OCI-LY7 (cell line): ENCODE measurements at regions of chr15 and their contacts with region 1.

Region 1: DNA sequence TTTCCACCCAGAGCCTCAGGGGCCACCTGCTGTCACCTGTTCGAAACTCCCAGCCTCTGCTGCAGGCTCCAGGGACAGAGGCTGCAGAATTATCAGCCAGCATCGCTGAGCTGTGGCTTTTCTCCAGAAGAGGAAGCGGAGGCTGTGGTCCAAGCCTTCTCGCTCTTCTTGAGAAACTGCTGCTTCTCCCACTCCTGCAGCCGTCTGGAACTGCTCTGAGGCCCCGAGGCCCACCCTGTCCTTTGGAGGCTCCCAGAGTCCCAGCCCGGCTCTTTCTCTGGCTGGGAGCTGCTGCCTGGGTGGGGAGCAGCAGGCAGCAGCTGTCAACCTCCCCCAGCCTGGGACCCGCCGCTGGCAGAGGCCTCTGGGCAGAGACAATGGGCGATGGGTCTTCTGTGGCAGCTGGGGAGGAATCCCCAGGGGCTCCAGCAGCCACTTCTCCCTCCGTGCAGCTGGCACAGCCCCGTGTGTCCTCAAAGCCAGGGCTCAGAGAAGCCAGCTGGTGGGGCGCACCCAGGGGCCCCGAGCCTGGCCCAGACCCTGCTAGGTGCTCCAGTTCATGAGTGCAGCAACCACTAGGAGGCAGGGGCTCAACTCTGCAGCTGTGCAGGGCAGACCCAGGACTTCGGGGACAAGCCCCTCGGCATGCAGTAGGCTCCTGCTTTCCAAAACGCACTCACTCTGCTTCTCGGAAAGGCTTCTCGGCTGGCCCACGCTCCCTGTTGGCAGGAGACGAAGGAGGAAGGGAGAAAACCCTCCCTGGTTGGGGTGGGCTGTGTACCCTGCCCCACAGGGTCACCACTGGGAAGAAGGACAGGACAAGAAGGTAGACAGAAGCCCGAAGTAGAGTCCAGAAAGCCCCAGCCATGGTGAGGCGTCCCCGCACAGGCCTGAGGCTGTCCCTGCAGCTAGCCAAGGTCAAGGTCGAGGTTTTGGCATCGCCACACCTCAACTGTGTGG is 49.9 kb upstream of the FURIN start:
- DNase-seq: peak; percentile 86
- H3K4me3 ChIP-seq: peak overlapping the region; percentile 10
- H3K27ac ChIP-seq: peak overlapping the region; percentile 67
- H3K4me1 ChIP-seq: peaks cover 33% of the 10 kb centered on the region
- CTCF ChIP-seq: peak; percentile 75

Region 2: DNA sequence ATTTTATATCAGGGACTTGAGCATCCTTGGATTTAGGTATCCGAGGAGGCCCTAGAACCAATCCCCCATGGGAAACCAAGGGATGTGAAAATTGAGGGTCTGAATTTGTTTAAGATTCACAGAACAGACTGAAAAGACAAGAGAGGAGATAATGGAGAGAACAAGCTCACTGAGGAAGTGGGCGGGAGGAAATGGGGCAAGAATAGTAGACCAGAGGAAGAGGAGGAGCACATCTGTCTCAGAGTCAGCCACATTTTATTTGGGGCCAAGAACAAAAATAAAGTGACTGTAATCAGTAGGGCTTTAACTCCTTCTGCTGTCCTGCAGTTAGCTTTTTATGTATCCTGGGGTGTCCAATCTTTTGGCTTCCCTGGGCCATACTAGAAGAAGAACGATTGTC is 37.6 kb before region 1 on chr15:
- CTCF ChIA-PET with region 1: no interaction called
- POLR2A ChIA-PET with region 1: interaction called, 3 read pairs
- intact Hi-C with region 1: loop called (anchors 1 kb)
- DNase-seq: peak; percentile 69
- H3K4me3 ChIP-seq: peak overlapping the region; percentile 28
- H3K27ac ChIP-seq: peak overlapping the region; percentile 77
- H3K4me1 ChIP-seq: peaks cover 67% of the 10 kb centered on the region
- CTCF ChIP-seq: no peak

Region 3: DNA sequence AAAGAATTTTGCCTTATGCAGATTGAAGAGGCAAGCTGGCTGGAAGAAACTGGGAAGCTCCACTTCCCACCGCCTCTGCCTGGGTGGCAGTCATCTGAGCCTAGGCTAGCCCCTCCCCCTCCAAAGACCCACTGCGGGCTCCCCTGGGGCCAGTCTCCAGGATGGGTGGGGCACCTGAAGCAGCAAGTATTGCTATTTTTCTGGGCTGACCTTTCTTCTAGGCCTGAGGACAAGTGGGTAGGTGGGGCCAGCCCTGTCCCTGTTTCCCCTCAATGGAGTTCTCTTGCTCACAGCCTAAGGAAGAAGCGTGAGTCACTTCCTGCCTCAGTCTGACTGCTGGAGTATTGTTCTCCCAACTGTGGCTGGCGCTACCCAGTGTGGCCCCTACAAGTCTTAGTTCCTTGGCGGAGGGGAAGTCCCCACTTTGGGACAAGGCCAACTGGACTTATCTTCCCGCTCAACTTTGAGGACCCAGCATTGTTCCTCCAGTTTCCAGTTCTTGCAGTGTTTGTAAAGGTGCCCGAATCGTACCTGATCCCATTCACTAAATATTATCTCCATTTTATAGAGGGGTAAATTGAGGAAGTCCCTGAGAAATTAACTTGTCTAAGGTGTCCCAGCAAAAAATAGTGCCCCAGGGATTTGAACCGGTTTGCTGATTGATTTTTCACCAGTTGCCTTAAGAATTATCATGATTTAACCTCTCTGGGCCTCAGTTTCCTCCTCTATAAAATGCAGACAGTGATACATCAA is 51.2 kb after region 1 on chr15:
- CTCF ChIA-PET with region 1: no interaction called
- POLR2A ChIA-PET with region 1: no interaction called
- intact Hi-C with region 1: loop called (anchors 1 kb)
- DNase-seq: peak; percentile 40
- H3K4me3 ChIP-seq: no peak overlapping the region
- H3K27ac ChIP-seq: no peak overlapping the region
- H3K4me1 ChIP-seq: peaks cover 36% of the 10 kb centered on the region
- CTCF ChIP-seq: no peak

Region 4: DNA sequence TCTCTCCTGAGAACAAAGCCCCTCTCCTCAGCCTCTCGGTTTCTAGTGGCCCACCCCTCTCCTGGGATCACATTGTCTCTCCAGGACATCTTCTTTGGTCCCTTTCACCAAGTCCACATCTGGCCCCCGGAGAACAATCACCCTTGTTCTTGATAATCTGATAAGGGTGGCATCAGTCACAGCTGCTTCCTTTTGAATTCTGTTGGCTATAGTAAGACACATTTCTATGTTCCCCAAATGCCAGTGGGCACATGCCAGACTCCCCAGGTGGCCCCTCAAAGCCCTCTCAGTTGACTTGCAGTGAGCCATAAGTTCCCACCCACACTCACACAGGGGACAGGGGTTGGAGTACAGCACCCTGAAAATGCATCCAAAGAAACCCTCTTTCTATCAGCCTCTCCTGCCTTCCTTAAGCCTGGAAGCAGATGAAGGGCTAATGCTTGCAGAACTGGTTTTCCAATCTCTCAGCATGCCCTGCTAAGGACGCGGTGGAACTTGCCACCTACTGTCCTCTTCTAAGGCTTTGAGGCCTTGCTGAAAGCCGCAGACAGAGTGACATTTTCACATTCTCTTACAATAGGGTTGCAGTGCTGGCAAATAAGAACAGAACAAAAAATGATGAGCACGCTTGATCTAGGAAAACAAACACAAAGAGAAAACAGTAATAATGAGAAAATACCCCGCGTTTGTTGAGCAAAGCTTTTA is 933.7 kb after region 1 on chr15:
- CTCF ChIA-PET with region 1: no interaction called
- POLR2A ChIA-PET with region 1: no interaction called
- intact Hi-C with region 1: no loop called
- DNase-seq: no peak
- H3K4me3 ChIP-seq: no peak overlapping the region
- H3K27ac ChIP-seq: no peak overlapping the region
- H3K4me1 ChIP-seq: no peaks in the 10 kb centered on the region
- CTCF ChIP-seq: no peak